ENCODE measurements at regions of chr6 and their contacts with region 1.

Region 1: DNA sequence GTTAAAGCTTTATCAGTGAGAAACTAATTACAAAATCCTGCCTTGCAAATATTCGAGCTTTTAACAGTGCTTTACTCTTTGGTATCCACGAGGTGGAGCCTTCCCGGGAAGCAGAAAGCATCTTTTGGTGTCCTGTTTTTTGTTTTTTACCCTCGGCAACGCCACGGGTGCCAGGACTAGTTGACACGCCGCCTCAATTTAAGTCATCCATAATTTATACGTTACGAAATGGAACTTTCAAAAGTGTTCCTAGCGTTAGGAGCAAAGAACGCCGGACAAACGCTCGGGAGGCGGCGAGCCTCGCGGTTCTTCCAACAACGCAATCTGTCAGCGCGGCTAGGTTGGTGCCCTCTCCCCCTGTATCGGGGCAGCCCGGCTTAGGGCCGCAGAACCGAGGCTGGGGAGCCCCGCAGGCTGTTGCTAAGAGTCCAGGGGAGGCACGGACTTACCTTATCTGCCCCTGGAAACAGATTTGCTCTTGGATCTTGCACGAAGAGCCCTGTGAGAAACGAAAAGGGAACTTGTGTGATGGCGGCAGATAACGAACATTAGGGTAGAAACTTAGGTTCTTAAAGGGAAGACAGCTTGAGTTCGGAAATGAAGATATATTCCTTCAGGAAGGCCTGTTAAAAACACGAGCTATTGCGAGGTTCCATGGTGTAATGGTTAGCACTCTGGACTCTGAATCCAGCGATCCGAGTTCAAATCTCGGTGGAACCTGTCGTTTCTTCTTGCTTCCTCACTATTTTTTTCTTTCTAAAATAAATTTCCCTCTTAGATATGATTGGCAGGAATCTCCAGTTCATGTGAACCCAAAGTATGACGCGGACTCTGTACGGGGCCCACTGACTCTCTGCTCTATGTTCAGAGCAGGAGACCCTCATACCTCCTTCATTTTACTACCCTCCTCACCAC is 46.2 kb upstream of the ZNF184 start:
- DNase-seq: peak; percentile 75
- ATAC-seq: peak; percentile 83
- H3K4me3 Mint-ChIP-seq: peak overlapping the region; percentile 80
- H3K27ac Mint-ChIP-seq: peak overlapping the region; percentile 80
- H3K4me1 Mint-ChIP-seq: peaks cover 15% of the 10 kb centered on the region
- H3K27me3 Mint-ChIP-seq: peaks cover 16% of the 10 kb centered on the region

Region 2: DNA sequence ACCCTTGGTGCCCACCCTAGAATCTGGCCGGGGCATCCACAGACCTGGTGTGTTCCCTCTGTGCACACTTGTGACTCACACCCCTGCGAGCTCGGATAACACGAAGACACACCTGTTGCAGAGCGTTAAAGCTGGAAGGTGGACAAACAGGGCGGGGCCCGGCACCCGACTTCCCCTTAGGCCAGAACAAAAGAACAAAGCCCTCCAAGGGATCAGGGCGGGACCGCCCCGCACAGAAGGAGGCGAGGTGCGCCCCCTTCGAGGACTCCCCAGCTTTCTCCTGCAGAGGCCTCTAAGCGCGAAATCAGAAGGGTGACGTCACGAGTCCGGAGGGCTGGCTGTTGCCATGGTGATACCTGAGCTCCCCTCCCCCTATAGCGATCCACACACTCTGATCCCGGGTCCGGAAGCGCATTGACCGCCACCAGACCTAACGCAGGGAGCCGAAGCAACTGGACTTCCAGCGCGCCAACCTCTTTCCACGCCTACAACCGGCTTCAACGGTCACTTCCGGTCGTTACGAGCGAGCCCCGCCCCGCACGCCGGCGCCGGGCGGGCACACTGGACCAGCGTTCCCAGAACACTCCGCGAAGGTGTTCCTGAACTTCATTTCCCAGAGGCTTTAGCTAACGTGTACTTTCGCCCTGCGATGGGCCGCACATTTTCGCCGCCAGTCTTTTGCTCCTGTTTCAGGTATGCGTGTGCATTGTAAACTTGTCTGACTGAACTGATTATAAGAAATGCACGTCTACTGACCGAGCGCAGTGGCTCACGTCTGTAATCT is 46.3 kb before region 1 on chr6 and contains the start of gene ZNF184:
- CTCF ChIA-PET with region 1: interaction called, 11 read pairs
- POLR2A ChIA-PET with region 1: no interaction called
- intact Hi-C with region 1: no loop called
- DNase-seq: peak; percentile 91
- ATAC-seq: peak; percentile 83
- H3K4me3 Mint-ChIP-seq: peak within 1 kb of the TSS; percentile 84
- H3K27ac Mint-ChIP-seq: peak within 1 kb of the TSS; percentile 97
- H3K4me1 Mint-ChIP-seq: peaks cover 44% of the 10 kb centered on the region
- H3K27me3 Mint-ChIP-seq: no peaks in the 10 kb centered on the region
- total RNA-seq, gene ZNF184: 11.8 to 14.5 TPM

Region 3: GRCh38 chr6:27503436-27504030 is 15.6 kb before region 1 on chr6:
- CTCF ChIA-PET with region 1: interaction called, 28 read pairs
- POLR2A ChIA-PET with region 1: interaction called, 4 read pairs
- intact Hi-C with region 1: loop called (anchors 1 to 2 kb)
- DNase-seq: peak; percentile 87
- ATAC-seq: peak; percentile 40
- H3K4me3 Mint-ChIP-seq: peak overlapping the region; percentile 88
- H3K27ac Mint-ChIP-seq: peak overlapping the region; percentile 83
- H3K4me1 Mint-ChIP-seq: peaks cover 26% of the 10 kb centered on the region
- H3K27me3 Mint-ChIP-seq: peaks cover 4% of the 10 kb centered on the region

Region 4: DNA sequence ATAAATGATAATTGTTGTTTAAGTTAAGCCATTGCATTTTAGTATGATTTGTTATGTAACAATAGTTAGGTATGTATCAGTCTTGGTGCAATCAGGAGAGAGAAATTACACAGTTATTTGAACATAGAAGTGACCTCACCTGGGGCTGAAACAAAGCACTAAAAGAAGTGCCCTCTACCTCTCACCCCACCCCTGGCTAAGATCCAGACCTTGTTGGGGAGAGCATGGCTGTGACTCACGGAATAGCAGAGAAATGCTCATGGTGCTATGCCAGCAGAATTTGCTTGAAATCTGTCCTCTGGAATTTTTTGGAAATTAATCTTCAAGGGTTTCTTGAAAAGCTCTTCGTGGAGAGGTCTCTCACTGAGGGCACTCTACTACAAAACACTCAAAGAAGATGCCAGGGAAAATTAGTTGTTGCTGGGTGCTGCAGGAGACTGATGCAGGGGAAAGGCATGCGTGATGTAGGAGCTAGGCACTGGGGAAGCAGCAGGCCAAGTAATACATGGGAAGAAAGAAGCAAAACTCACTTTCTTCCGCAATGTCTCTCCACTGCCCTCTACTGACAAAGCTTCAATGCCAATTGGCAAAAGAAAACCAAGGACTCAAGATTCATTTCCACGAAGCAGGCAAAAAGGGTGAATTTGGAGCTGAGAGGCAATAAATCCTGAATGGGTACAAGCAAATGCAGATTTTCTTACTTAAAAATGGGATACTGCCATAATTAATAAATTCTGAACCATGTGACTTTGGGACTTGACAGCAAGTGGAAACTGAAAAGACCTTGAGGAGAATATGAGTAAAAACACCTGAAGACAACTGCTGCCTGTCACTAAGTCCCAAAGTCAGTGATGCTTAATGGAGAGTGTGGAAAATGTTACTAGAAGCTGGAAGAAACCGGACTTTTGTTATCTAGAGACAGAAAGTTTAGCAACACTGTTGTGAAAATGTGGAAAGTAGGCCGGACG is 90.1 kb after region 1 on chr6:
- CTCF ChIA-PET with region 1: interaction called, 4 read pairs
- POLR2A ChIA-PET with region 1: no interaction called
- intact Hi-C with region 1: loop called (anchors 1 to 5 kb)
- DNase-seq: no peak
- ATAC-seq: no peak
- H3K4me3 Mint-ChIP-seq: no peak overlapping the region
- H3K27ac Mint-ChIP-seq: no peak overlapping the region
- H3K4me1 Mint-ChIP-seq: peaks cover 13% of the 10 kb centered on the region
- H3K27me3 Mint-ChIP-seq: peaks cover 46% of the 10 kb centered on the region

Region 5: DNA sequence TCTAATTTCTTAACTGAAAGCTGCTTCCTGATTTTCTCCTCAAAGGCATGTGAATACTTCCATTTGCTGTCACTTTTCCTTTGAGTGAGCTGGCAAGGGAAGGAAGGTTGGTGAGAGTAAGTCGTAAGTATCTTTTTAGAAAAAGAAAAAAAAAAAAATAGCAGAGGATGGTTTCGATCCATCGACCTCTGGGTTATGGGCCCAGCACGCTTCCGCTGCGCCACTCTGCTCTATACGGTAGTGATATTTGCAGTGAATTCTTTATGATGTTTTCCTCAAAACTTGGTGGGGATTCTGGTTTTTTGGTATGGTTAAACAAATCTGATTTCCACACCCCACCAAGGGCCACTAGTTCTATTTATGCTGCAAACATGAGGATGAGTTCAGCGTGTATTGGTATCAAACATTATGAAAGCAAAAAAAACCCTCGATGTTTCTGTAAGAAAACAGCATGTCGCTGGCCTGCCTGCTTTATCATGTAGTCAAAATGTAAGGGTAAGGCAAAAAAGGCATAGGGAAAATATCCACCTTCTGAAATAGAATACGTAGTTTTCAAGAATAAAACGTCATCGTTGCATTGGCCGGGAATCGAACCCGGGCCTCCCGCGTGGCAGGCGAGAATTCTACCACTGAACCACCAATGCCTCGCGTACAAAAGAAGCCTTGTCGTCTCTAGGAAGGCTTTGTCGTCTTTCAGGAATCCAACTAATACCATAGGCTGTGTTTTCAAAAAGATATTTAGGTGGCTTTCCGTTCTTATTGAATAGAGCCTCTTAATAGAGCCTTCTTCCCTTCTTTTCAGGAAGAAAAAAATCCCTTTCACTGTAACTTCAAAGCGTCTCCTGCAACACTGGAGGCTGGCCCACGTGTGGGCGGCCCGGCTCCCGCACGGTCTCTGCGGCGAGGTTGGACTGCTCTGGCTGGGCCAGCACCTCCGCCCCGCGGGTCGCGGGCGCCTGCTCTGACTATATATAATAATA is 383.5 kb after region 1 on chr6:
- CTCF ChIA-PET with region 1: interaction called, 3 read pairs
- POLR2A ChIA-PET with region 1: no interaction called
- intact Hi-C with region 1: loop called in 1 of 2 experiments (anchors 10 kb)
- DNase-seq: peak; percentile 91
- ATAC-seq: peak; percentile 81
- H3K4me3 Mint-ChIP-seq: peak overlapping the region; percentile 74
- H3K27ac Mint-ChIP-seq: peak overlapping the region; percentile 89
- H3K4me1 Mint-ChIP-seq: peaks cover 5% of the 10 kb centered on the region
- H3K27me3 Mint-ChIP-seq: peaks cover 4% of the 10 kb centered on the region